B cell (primary cell): ENCODE measurements at regions of chr11 and their contacts with region 1.

Region 1: DNA sequence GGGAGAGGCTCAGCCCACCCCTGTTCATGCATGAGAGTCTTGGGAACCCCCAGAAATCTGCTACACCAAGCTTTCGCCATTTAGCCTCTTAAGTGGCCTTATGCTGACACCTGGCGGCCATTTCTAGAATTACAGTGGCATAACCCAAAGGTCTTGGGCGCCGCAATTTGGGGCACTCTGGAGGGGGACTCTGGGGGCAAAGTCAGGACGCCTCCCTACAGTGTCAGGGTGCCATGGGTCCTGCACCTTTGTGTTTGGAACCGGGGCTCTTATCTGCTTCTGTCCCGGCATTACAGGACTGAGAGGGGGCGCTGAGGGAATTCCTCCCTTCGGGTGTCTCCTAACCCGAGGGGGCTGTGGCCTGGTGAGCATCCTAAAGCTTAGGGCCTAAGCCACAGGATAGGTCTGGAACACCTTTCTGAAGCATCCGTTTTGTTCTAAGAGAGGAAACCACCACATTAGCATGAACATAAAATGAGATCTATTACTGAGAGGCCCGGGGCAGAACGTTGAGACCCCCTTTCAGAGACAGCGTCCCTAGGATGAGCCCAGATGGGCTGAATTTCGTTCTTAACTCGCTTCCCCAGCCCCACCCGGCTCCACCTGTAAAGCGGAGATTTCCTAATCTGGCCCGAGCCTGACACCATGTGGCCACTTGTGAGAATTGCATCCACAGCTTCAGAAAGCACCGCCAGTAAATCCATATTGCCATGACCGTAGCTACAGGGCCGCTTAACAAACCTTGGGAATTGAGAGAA is 9.3 kb downstream of the INS start:
- DNase-seq: peak; percentile 88
- ATAC-seq: peak; percentile 84
- H3K4me3 ChIP-seq: peak overlapping the region in 2 of 5 experiments; percentile 9 to 14
- H3K4me3 Mint-ChIP-seq: peak overlapping the region; percentile 52
- H3K27ac ChIP-seq: no peak overlapping the region
- H3K27ac Mint-ChIP-seq: peak overlapping the region; percentile 46
- H3K4me1 ChIP-seq: peaks cover 5 to 9% of the 10 kb centered on the region in 2 donors
- H3K4me1 Mint-ChIP-seq: peaks cover 10% of the 10 kb centered on the region
- H3K27me3 ChIP-seq: peaks cover 0 to 34% (median 17%) of the 10 kb centered on the region in 4 experiments
- H3K27me3 Mint-ChIP-seq: peaks cover 35% of the 10 kb centered on the region
- CTCF ChIP-seq: peak; percentile 77

Region 2: GRCh38 chr11:1694064-1694845 is 457.4 kb before region 1 on chr11:
- CTCF ChIA-PET with region 1: interaction called, 217 read pairs
- POLR2A ChIA-PET with region 1: interaction called, 7 read pairs
- intact Hi-C with region 1: no loop called
- DNase-seq: peak; percentile 85
- ATAC-seq: peak; percentile 84
- H3K4me3 ChIP-seq: peak overlapping the region in 1 of 5 experiments; percentile 19
- H3K4me3 Mint-ChIP-seq: no peak overlapping the region
- H3K27ac ChIP-seq: no peak overlapping the region
- H3K27ac Mint-ChIP-seq: no peak overlapping the region
- H3K4me1 ChIP-seq: peaks cover 8 to 14% of the 10 kb centered on the region in 2 donors
- H3K4me1 Mint-ChIP-seq: peaks cover 5% of the 10 kb centered on the region
- H3K27me3 ChIP-seq: peaks cover 0 to 43% (median 6%) of the 10 kb centered on the region in 4 experiments
- H3K27me3 Mint-ChIP-seq: peaks cover 44% of the 10 kb centered on the region
- CTCF ChIP-seq: peak; percentile 70

Region 3: DNA sequence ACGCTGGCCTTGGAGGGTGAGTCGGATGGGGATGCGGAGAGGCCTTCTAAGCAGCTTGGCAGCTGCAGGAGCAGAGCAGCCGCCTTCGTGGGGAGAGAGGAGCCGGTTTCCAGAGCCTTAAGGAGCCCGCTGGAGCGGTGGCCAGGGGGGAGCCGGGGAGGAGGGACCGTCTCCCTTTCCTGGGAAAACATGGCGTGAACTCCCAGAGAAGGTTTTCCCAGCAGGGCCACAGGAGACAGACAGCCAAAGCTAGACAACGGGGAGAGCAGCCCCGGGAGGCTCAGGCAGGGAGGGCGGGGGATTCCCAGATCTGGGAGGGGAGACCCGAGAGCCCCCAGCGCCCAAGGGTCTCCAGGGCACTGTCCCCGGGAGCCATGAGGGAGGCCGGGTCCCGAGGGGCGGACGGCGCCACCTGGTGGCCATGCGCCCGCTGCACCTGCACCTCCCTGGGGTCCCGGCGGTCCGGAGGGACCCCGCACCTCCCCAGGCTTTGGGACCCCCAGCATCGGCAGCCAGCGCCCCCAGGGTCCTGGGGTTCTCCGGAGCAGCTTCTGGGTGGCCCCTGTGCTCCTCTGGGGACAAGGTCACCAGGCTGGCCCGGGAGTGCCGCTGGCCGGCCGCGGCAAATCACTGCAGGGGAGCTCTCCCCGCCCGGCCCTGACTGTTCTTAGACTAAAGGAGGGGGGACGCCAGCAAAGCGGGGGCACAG is 319.3 kb before region 1 on chr11:
- CTCF ChIA-PET with region 1: interaction called, 71 read pairs
- POLR2A ChIA-PET with region 1: no interaction called
- intact Hi-C with region 1: no loop called
- DNase-seq: peak; percentile 76
- ATAC-seq: peak; percentile 77
- H3K4me3 ChIP-seq: no peak overlapping the region
- H3K4me3 Mint-ChIP-seq: no peak overlapping the region
- H3K27ac ChIP-seq: no peak overlapping the region
- H3K27ac Mint-ChIP-seq: no peak overlapping the region
- H3K4me1 ChIP-seq: peaks cover 4 to 9% of the 10 kb centered on the region in 2 donors
- H3K4me1 Mint-ChIP-seq: peaks cover 3% of the 10 kb centered on the region
- H3K27me3 ChIP-seq: peaks cover 0 to 28% (median 5%) of the 10 kb centered on the region in 4 experiments
- H3K27me3 Mint-ChIP-seq: peaks cover 8% of the 10 kb centered on the region
- CTCF ChIP-seq: peak; percentile 99

Region 4: GRCh38 chr11:1876361-1877063 is 275.2 kb before region 1 on chr11:
- CTCF ChIA-PET with region 1: interaction called, 17 read pairs
- POLR2A ChIA-PET with region 1: no interaction called
- intact Hi-C with region 1: loop called (anchors 5 kb)
- DNase-seq: no peak
- ATAC-seq: no peak
- H3K4me3 ChIP-seq: no peak overlapping the region
- H3K4me3 Mint-ChIP-seq: no peak overlapping the region
- H3K27ac ChIP-seq: peak overlapping the region in 1 of 2 donors; percentile 3
- H3K27ac Mint-ChIP-seq: peak overlapping the region; percentile 46
- H3K4me1 ChIP-seq: peaks cover 35 to 83% of the 10 kb centered on the region in 2 donors
- H3K4me1 Mint-ChIP-seq: peaks cover 65% of the 10 kb centered on the region
- H3K27me3 ChIP-seq: no peaks in the 10 kb centered on the region
- H3K27me3 Mint-ChIP-seq: no peaks in the 10 kb centered on the region
- CTCF ChIP-seq: peak; percentile 29

Region 5: GRCh38 chr11:2036863-2037486 is 114.7 kb before region 1 on chr11:
- CTCF ChIA-PET with region 1: interaction called, 156 read pairs
- POLR2A ChIA-PET with region 1: no interaction called
- intact Hi-C with region 1: no loop called
- DNase-seq: no peak
- ATAC-seq: peak; percentile 57
- H3K4me3 ChIP-seq: no peak overlapping the region
- H3K4me3 Mint-ChIP-seq: no peak overlapping the region
- H3K27ac ChIP-seq: no peak overlapping the region
- H3K27ac Mint-ChIP-seq: no peak overlapping the region
- H3K4me1 ChIP-seq: no peaks in the 10 kb centered on the region
- H3K4me1 Mint-ChIP-seq: no peaks in the 10 kb centered on the region
- H3K27me3 ChIP-seq: no peaks in the 10 kb centered on the region
- H3K27me3 Mint-ChIP-seq: no peaks in the 10 kb centered on the region
- CTCF ChIP-seq: no peak

Region 6: DNA sequence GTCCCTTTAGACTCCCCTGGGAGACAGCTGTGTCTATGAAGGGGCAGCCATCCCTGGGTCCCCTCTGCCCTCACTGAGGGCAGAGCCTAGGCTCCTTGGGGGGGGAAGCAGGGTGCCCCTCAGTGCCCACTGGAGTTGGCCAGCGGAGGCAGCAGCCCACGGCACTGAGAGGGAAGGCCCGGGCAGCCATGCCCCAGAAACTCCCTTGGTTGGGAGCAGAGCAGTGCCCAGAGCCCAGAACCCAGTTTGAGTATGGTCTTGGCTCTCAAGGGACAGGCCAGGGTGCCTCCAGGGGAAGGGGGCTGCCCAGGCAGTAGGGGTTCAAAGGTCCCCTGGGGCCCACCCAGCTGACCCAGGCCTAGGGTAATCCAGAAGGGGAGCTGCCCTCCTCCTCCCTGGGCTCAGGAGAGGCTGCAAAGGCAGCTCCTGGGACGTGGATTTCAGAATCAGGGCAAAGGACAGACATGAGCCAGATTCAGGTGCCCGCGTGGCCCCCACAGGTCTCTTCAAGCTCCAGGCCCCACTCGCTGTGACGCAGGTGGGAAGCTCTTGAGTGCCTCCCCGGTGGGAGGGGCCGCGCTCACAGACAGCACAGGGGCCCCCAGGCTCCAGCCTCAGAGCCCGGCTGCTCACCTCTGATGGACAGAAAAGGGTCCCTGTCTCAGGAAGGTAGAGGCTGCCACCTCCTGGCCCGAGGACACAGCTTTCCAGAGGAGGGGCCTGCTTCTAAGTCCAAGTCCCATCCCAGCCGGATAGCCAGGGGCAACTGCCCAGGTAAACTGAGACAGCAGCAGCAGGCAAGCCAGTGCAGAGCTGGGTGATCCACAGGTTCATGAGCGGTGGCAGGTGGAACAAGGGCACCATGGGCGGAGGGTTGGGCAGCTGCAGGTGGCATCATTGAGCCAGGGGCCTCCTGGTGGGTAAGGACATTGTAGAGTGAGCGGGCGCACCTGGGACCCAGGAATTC is 147.4 kb after region 1 on chr11:
- CTCF ChIA-PET with region 1: interaction called, 10 read pairs
- POLR2A ChIA-PET with region 1: no interaction called
- intact Hi-C with region 1: no loop called
- DNase-seq: peak; percentile 52
- ATAC-seq: no peak
- H3K4me3 ChIP-seq: peak overlapping the region in 2 of 5 experiments; percentile 21 to 44
- H3K4me3 Mint-ChIP-seq: peak overlapping the region; percentile 50
- H3K27ac ChIP-seq: peak overlapping the region in 1 of 2 donors; percentile 37
- H3K27ac Mint-ChIP-seq: peak overlapping the region; percentile 88
- H3K4me1 ChIP-seq: peaks cover 51 to 57% of the 10 kb centered on the region in 2 donors
- H3K4me1 Mint-ChIP-seq: peaks cover 58% of the 10 kb centered on the region
- H3K27me3 ChIP-seq: no peaks in the 10 kb centered on the region
- H3K27me3 Mint-ChIP-seq: no peaks in the 10 kb centered on the region
- CTCF ChIP-seq: no peak

Region 7: DNA sequence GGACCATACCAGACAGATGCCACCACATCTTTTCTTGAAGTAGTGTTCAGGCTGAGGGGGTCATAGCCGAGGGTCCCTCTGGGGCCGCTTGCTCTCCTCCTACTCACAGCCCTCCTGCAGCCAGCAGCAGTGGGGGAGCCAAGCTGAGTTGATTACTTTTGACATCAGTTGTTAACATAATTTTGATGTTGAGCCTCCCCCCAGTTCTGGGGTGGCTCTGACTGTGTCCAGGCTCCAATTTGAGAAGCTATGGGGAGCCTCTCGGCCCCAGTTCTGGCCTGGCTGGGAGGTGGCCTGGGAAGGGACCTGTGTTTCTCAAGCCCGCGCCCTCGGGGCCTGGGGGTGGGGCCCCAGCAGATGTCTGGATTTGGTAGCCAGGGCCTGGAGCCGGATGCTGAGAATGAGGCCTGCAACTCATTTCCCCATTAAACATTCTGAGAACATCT is 500.2 kb after region 1 on chr11:
- CTCF ChIA-PET with region 1: no interaction called
- POLR2A ChIA-PET with region 1: no interaction called
- intact Hi-C with region 1: no loop called
- DNase-seq: no peak
- ATAC-seq: no peak
- H3K4me3 ChIP-seq: no peak overlapping the region
- H3K4me3 Mint-ChIP-seq: no peak overlapping the region
- H3K27ac ChIP-seq: no peak overlapping the region
- H3K27ac Mint-ChIP-seq: no peak overlapping the region
- H3K4me1 ChIP-seq: no peaks in the 10 kb centered on the region
- H3K4me1 Mint-ChIP-seq: no peaks in the 10 kb centered on the region
- H3K27me3 ChIP-seq: no peaks in the 10 kb centered on the region
- H3K27me3 Mint-ChIP-seq: no peaks in the 10 kb centered on the region
- CTCF ChIP-seq: no peak